Heart left ventricle (tissue), 16 donors: ENCODE measurements at regions of chr20 and their contacts with region 1.

Region 1: GRCh38 chr20:54475334-54476168 is at the start of gene DOK5:
- DNase-seq: peak in 4 of 5 donors; percentile 53 to 68 (median 61)
- ATAC-seq: peak; percentile 70 to 93 (median 90)
- H3K4me3 ChIP-seq: peak within 1 kb of the TSS; percentile 45 to 92 (median 72)
- H3K27ac ChIP-seq: peak within 1 kb of the TSS in 10 of 12 donors; percentile 24 to 83 (median 56)
- H3K4me1 ChIP-seq: peaks cover 0 to 21% (median 6%) of the 10 kb centered on the region in 12 donors
- H3K27me3 ChIP-seq: peaks cover 0 to 31% (median 0%) of the 10 kb centered on the region in 9 donors
- CTCF ChIP-seq: peak in 2 of 12 donors; percentile 10 to 17
- POLR2A ChIP-seq: no peak
- total RNA-seq, gene DOK5: 3.4 to 23.5 (median 7.0) TPM

Region 2: GRCh38 chr20:54207743-54208547 is 267.6 kb before region 1 on chr20 and contains the start of gene PFDN4:
- intact Hi-C with region 1: no loop called
- DNase-seq: peak; percentile 82 to 88 (median 85)
- ATAC-seq: peak; percentile 92 to 99 (median 98)
- H3K4me3 ChIP-seq: peak within 1 kb of the TSS; percentile 68 to 99 (median 93)
- H3K27ac ChIP-seq: peak within 1 kb of the TSS; percentile 94 to 100 (median 98)
- H3K4me1 ChIP-seq: peaks cover 0 to 30% (median 18%) of the 10 kb centered on the region in 12 donors
- H3K27me3 ChIP-seq: no peaks in the 10 kb centered on the region
- CTCF ChIP-seq: peak; percentile 74 to 97 (median 88)
- POLR2A ChIP-seq: peak in 1 of 2 donors; percentile 31
- total RNA-seq, gene PFDN4: 21.0 to 92.0 (median 28.4) TPM

Region 3: DNA sequence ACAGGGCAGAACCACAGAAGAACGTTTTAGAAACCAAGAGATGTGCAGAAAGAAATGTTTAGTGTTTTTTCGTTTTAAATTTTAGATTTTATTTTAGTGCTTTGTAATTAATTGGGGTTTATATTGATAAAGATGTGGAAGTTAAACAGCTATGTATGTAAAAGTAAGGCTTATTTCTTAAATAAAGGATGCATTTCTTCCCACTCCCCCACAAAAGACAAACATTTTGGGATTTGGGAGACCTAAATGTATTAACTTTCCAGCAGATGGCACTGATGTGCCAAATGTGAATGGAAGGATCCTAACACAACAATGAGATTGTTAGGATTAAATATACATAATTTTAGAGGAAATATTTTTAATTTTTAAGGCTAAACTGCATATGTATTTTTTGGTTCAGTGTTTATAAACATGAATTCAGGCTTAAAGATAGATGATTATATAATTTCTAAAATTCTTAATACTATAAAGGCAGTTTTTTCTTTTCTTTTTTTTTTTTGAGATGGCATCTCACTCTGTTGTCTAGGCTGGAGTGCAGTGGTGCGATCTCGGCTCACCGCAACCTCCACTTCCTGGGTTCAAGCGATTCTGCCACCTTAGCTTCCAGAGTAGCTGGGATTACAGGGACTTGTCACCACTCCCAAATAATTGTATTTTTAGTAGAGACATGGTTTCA is 255.7 kb before region 1 on chr20:
- intact Hi-C with region 1: loop called in 4 of 10 experiments (anchors 5 to 10 kb)
- DNase-seq: no peak
- ATAC-seq: no peak
- H3K4me3 ChIP-seq: no peak overlapping the region
- H3K27ac ChIP-seq: no peak overlapping the region
- H3K4me1 ChIP-seq: peaks cover 0 to 32% (median 16%) of the 10 kb centered on the region in 12 donors
- H3K27me3 ChIP-seq: no peaks in the 10 kb centered on the region
- CTCF ChIP-seq: peak; percentile 20 to 73 (median 54)
- POLR2A ChIP-seq: no peak

Region 4: GRCh38 chr20:54368557-54368956 is 107.0 kb before region 1 on chr20:
- intact Hi-C with region 1: no loop called
- DNase-seq: no peak
- ATAC-seq: no peak
- H3K4me3 ChIP-seq: no peak overlapping the region
- H3K27ac ChIP-seq: no peak overlapping the region
- H3K4me1 ChIP-seq: no peaks in the 10 kb centered on the region
- H3K27me3 ChIP-seq: no peaks in the 10 kb centered on the region
- CTCF ChIP-seq: no peak
- POLR2A ChIP-seq: no peak

Region 5: GRCh38 chr20:54619181-54619580 is 143.6 kb after region 1 on chr20:
- intact Hi-C with region 1: loop called in 2 of 10 experiments (anchors 5 kb)
- DNase-seq: peak in 1 of 5 donors; percentile 18
- ATAC-seq: peak in 3 of 4 donors; percentile 72 to 91 (median 90)
- H3K4me3 ChIP-seq: peak overlapping the region in 6 of 12 donors; percentile 7 to 42 (median 25)
- H3K27ac ChIP-seq: peak overlapping the region in 6 of 12 donors; percentile 22 to 79 (median 40)
- H3K4me1 ChIP-seq: peaks cover 0 to 16% (median 0%) of the 10 kb centered on the region in 12 donors
- H3K27me3 ChIP-seq: no peaks in the 10 kb centered on the region
- CTCF ChIP-seq: no peak
- POLR2A ChIP-seq: no peak

Region 6: DNA sequence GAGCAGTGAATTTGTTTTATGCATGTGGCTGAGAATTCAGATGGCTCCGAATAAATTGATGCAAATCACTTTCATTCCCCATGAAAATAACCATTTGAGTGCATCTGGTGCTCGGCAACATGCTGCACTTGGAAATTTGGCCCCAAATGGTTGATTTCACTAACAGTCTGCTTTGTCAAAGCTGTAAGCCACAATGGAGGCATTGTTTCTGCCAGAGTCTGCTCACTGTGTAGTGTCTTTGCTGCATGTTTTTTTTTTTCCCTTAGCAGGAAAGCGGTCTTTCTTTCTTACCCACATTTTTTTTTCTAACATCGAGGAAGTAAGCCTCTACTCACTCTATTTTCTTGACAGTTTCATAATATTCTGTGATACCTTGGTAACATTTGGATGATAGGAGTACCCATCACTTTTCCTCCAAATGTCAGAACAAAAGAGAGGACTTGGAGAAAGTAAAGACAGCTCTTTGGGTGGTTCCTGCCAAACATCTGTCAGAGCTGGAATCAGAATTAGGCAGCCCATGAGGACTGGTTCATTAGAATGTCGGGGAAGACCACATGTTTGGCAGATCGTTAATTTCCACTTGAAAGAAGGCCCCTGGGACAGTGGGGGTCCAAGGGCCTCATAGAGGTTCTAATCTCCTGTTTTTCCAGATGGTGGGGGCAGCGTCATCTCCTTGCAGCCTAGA is 149.3 kb after region 1 on chr20:
- intact Hi-C with region 1: loop called in 3 of 10 experiments (anchors 5 to 10 kb)
- DNase-seq: peak in 3 of 5 donors; percentile 24 to 34 (median 33)
- ATAC-seq: peak; percentile 39 to 73 (median 60)
- H3K4me3 ChIP-seq: no peak overlapping the region
- H3K27ac ChIP-seq: peak overlapping the region in 5 of 12 donors; percentile 16 to 65 (median 51)
- H3K4me1 ChIP-seq: peaks cover 0 to 20% (median 0%) of the 10 kb centered on the region in 12 donors
- H3K27me3 ChIP-seq: no peaks in the 10 kb centered on the region
- CTCF ChIP-seq: no peak
- POLR2A ChIP-seq: no peak

Region 7: GRCh38 chr20:54633374-54634355 is 158.1 kb after region 1 on chr20:
- intact Hi-C with region 1: loop called in 2 of 10 experiments (anchors 5 to 10 kb)
- DNase-seq: no peak
- ATAC-seq: no peak
- H3K4me3 ChIP-seq: no peak overlapping the region
- H3K27ac ChIP-seq: no peak overlapping the region
- H3K4me1 ChIP-seq: no peaks in the 10 kb centered on the region
- H3K27me3 ChIP-seq: no peaks in the 10 kb centered on the region
- CTCF ChIP-seq: no peak
- POLR2A ChIP-seq: no peak